ENCODE measurements at regions of chr1 and their contacts with region 1.

Region 1: GRCh38 chr1:202957733-202958543 is at the start of gene ADIPOR1:
- DNase-seq: peak; percentile 92
- H3K4me3 Mint-ChIP-seq: peak within 1 kb of the TSS; percentile 89
- H3K27ac Mint-ChIP-seq: peak within 1 kb of the TSS; percentile 80
- H3K4me1 Mint-ChIP-seq: peaks cover 46% of the 10 kb centered on the region
- H3K27me3 Mint-ChIP-seq: peaks cover 2% of the 10 kb centered on the region
- total RNA-seq, gene ADIPOR1: 88.7 and 93.3 TPM in 2 replicates

Region 2: DNA sequence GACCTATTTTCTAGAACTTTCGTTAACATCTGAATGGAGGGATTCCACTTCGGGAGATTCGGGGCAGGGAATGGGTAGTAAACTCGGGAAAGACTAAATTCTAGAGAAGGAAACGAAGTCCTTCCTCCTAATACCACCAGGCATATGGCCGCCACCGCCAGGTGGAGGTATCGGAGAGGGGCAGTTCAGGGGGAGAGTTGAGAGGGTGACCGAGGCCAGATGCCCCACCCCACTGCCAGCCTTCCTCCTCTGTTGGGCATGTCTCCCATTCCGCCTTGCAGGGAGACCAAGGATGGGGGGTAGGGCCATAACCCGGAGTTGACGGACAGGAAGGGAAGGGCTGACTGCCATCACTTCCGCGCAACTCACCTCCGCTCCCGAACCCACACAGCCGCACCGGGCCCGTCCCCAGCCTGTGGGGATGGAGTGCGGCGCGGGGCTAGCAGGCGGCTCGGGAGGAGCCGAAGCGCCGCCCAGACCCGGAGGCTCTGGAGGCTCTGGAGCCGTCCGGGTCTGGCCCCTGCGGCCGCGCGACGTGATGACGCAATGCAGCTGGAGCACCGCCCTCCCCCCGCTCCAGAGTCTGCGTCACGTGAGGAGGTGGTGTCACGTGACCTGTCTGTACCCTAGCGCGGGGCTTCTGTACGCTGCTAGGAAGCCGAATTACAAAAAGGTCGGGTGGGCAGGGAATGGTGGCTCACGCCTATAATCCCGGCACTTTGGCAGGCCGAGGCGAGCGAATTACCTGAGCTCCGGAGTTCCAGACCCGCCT is 31.0 kb before region 1 on chr1 and contains the start of gene KLHL12:
- intact Hi-C with region 1: loop called (anchors 1 kb)
- DNase-seq: peak; percentile 92
- H3K4me3 Mint-ChIP-seq: peak within 1 kb of the TSS; percentile 97
- H3K27ac Mint-ChIP-seq: peak within 1 kb of the TSS; percentile 95
- H3K4me1 Mint-ChIP-seq: peaks cover 34% of the 10 kb centered on the region
- H3K27me3 Mint-ChIP-seq: peaks cover 3% of the 10 kb centered on the region
- total RNA-seq, gene KLHL12: 24.9 and 25.5 TPM in 2 replicates

Region 3: DNA sequence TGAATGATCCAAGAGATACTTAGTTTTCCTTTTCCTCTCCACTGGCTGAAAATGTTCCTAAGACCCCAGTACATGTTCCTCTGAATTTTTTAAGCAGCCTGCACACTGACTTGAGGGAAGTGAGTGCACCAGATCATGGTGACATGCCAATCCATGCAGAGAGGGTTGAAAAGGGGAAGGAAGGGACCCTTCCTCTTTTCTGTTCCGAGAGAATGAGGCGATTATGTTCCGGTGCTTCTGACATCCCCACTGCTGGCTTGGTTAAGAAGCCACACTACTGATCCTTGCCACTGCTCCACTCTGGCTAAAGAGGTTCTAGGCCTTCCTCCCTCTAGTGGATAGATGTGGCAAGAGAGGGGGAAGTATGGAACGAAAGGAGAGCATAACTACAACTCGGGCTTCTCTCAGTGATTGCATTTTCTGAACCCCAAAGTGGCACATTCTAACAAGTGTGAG is 10.9 kb after region 1 on chr1:
- intact Hi-C with region 1: loop called (anchors 1 kb)
- DNase-seq: peak; percentile 20
- H3K4me3 Mint-ChIP-seq: peak overlapping the region; percentile 48
- H3K27ac Mint-ChIP-seq: no peak overlapping the region
- H3K4me1 Mint-ChIP-seq: peaks cover 35% of the 10 kb centered on the region
- H3K27me3 Mint-ChIP-seq: peaks cover 11% of the 10 kb centered on the region

Region 4: GRCh38 chr1:203006948-203007871 is 49.3 kb after region 1 on chr1 and contains the start of gene TMEM183A:
- intact Hi-C with region 1: loop called (anchors 1 kb)
- DNase-seq: peak; percentile 95
- H3K4me3 Mint-ChIP-seq: peak within 1 kb of the TSS; percentile 89
- H3K27ac Mint-ChIP-seq: peak within 1 kb of the TSS; percentile 96
- H3K4me1 Mint-ChIP-seq: peaks cover 34% of the 10 kb centered on the region
- H3K27me3 Mint-ChIP-seq: no peaks in the 10 kb centered on the region
- total RNA-seq, gene TMEM183A: 69.9 and 83.6 TPM in 2 replicates

Region 5: GRCh38 chr1:203026031-203026989 is 68.4 kb after region 1 on chr1 and contains the start of gene PPFIA4:
- intact Hi-C with region 1: loop called (anchors 2 kb)
- DNase-seq: peak; percentile 87
- H3K4me3 Mint-ChIP-seq: peak within 1 kb of the TSS; percentile 85
- H3K27ac Mint-ChIP-seq: peak within 1 kb of the TSS; percentile 65
- H3K4me1 Mint-ChIP-seq: peaks cover 25% of the 10 kb centered on the region
- H3K27me3 Mint-ChIP-seq: no peaks in the 10 kb centered on the region
- total RNA-seq, gene PPFIA4: 11.5 and 14.9 TPM in 2 replicates

Measured in activated T-helper 1 cell treated with anti-CD3 and anti-CD28 coated beads, Interleukin-12 subunit alpha, Interleukin-12 subunit beta, Interleukin-2, Interleukin-4 antibody, amounts not matched to agents 30 ng/mL and 10 ng/mL and 1 ng/mL, durations not matched to agents 14 hours and 24 hours and 36 hours (primary cell).